Natural killer cell (primary cell): ENCODE measurements at regions of chr19 and their contacts with region 1.

Region 1: GRCh38 chr19:10797541-10798256 is 38.3 kb downstream of the TMED1 start:
- DNase-seq: peak; percentile 94 to 96
- ATAC-seq: peak; percentile 77 to 91 (median 78)
- H3K4me3 ChIP-seq: peak overlapping the region; percentile 20
- H3K4me3 Mint-ChIP-seq: peak overlapping the region; percentile 96
- H3K27ac ChIP-seq: peak overlapping the region; percentile 98
- H3K27ac Mint-ChIP-seq: peak overlapping the region; percentile 93 to 100
- H3K4me1 ChIP-seq: peaks cover 69% of the 10 kb centered on the region
- H3K4me1 Mint-ChIP-seq: peaks cover 47 to 54% of the 10 kb centered on the region in 2 donors
- H3K27me3 ChIP-seq: no peaks in the 10 kb centered on the region
- H3K27me3 Mint-ChIP-seq: no peaks in the 10 kb centered on the region
- CTCF ChIP-seq: no peak

Region 2: DNA sequence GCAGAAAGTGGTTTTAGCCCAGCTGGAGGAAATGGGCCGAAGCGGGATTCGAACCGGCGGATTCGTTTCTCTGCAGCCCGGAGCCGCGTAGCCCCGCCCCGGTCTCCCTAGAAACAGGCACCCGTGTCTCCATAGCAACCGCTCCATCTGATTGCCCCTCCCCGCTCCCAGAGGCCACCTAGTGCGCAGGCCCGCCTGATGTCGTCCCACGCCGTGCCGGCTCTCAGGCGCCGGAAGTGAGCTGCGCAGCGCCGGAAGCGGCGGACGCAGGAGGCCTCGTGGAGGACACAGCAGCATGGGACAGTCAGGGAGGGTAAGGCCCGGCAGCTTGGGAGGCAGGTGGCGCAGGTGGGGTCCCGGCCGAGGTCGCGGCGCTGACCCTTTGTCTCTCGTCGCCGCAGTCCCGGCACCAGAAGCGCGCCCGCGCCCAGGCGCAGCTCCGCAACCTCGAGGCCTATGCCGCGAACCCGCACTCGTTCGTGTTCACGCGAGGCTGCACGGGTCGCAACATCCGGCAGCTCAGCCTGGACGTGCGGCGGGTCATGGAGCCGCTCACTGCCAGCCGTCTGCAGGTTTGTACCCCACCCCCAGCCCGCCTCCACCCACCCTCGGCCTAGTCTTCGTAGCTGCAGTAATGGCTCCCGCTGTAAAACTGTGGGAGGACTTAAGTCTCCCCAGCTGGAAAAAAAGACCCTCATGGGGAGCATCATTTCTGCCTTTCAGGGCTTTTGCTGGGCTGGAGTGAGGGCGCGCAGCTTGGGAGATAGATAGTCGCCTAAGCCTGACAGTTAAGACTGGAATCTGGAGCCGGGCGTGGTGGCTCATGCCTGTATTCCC is 691.4 kb before region 1 on chr19 and contains the start of gene PPAN:
- intact Hi-C with region 1: loop called (anchors 10 kb)
- DNase-seq: peak; percentile 94 to 100
- ATAC-seq: peak; percentile 47 to 79 (median 58)
- H3K4me3 ChIP-seq: peak within 1 kb of the TSS; percentile 37
- H3K4me3 Mint-ChIP-seq: peak within 1 kb of the TSS; percentile 88
- H3K27ac ChIP-seq: peak within 1 kb of the TSS; percentile 100
- H3K27ac Mint-ChIP-seq: peak within 1 kb of the TSS; percentile 94 to 99
- H3K4me1 ChIP-seq: peaks cover 86% of the 10 kb centered on the region
- H3K4me1 Mint-ChIP-seq: peaks cover 51 to 70% of the 10 kb centered on the region in 2 donors
- H3K27me3 ChIP-seq: no peaks in the 10 kb centered on the region
- H3K27me3 Mint-ChIP-seq: no peaks in the 10 kb centered on the region
- CTCF ChIP-seq: no peak
- total RNA-seq, gene PPAN: 60.0 to 72.2 (median 69.2) TPM

Region 3: GRCh38 chr19:10565567-10566407 is 231.9 kb before region 1 on chr19 and contains the start of gene KRI1:
- intact Hi-C with region 1: loop called (anchors 2 kb)
- DNase-seq: peak; percentile 98 to 100
- ATAC-seq: peak; percentile 38 to 71 (median 51)
- H3K4me3 ChIP-seq: peak within 1 kb of the TSS; percentile 99
- H3K4me3 Mint-ChIP-seq: peak within 1 kb of the TSS; percentile 96
- H3K27ac ChIP-seq: peak within 1 kb of the TSS; percentile 93
- H3K27ac Mint-ChIP-seq: peak within 1 kb of the TSS; percentile 93 to 100
- H3K4me1 ChIP-seq: peaks cover 40% of the 10 kb centered on the region
- H3K4me1 Mint-ChIP-seq: peaks cover 47 to 62% of the 10 kb centered on the region in 2 donors
- H3K27me3 ChIP-seq: no peaks in the 10 kb centered on the region
- H3K27me3 Mint-ChIP-seq: no peaks in the 10 kb centered on the region
- CTCF ChIP-seq: no peak
- total RNA-seq, gene KRI1: 36.6 to 53.0 (median 49.5) TPM

Region 4: DNA sequence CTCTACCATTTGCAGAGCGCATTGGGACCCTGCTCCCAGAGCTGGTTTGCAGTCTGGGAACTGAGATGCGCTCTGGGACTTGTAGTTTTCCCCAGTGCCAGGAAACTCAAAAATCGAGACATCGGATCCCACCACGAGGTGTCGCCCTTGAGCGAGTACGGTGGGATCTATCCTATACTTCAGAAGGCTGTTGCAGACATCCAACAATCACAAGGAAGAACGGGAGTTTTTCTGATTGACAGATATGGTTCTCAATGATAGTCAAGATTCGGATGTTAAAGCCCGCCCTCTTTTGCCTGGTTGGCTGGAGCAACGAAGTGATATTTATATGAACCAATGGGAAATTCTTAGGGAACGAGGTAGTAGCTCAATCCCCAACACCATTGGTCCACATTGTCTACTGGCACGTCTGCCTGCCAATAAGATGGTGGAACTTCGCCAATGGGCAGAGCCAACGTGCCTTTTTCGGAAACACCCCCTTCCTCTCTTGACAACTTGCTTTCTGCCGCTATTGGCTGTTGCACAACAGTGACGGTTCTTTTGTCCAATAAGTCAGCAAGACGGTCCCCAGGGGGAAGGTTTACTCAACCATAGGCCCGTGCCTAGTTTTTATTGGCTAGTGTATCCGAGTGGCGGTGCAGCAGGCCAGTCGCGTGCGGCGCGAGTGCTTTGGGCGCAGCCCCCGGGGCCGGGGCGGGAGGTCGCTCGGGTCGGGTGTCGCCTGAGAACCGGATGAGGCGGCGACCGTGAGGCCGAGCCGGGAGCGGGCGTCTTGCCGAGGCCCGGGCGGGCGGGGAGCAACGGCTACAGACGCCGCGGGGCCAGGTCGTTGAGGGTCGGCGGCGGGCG is 80.1 kb before region 1 on chr19 and contains the start of gene DNM2:
- intact Hi-C with region 1: loop called (anchors 1 kb)
- DNase-seq: peak; percentile 96 to 99
- ATAC-seq: peak; percentile 82 to 94 (median 84)
- H3K4me3 ChIP-seq: peak within 1 kb of the TSS; percentile 76
- H3K4me3 Mint-ChIP-seq: peak within 1 kb of the TSS; percentile 98
- H3K27ac ChIP-seq: peak within 1 kb of the TSS; percentile 68
- H3K27ac Mint-ChIP-seq: peak within 1 kb of the TSS; percentile 92 to 95
- H3K4me1 ChIP-seq: peaks cover 53% of the 10 kb centered on the region
- H3K4me1 Mint-ChIP-seq: peaks cover 24 to 42% of the 10 kb centered on the region in 2 donors
- H3K27me3 ChIP-seq: no peaks in the 10 kb centered on the region
- H3K27me3 Mint-ChIP-seq: no peaks in the 10 kb centered on the region
- CTCF ChIP-seq: peak; percentile 65
- total RNA-seq, gene DNM2: 419 to 491 (median 428) TPM

Region 5: GRCh38 chr19:10758978-10759377 is 38.7 kb before region 1 on chr19:
- intact Hi-C with region 1: loop called (anchors 1 kb)
- DNase-seq: no peak
- ATAC-seq: no peak
- H3K4me3 ChIP-seq: no peak overlapping the region
- H3K4me3 Mint-ChIP-seq: peak overlapping the region; percentile 91
- H3K27ac ChIP-seq: peak overlapping the region; percentile 75
- H3K27ac Mint-ChIP-seq: peak overlapping the region; percentile 97 to 98
- H3K4me1 ChIP-seq: peaks cover 89% of the 10 kb centered on the region
- H3K4me1 Mint-ChIP-seq: peaks cover 75 to 83% of the 10 kb centered on the region in 2 donors
- H3K27me3 ChIP-seq: no peaks in the 10 kb centered on the region
- H3K27me3 Mint-ChIP-seq: no peaks in the 10 kb centered on the region
- CTCF ChIP-seq: no peak

Region 6: DNA sequence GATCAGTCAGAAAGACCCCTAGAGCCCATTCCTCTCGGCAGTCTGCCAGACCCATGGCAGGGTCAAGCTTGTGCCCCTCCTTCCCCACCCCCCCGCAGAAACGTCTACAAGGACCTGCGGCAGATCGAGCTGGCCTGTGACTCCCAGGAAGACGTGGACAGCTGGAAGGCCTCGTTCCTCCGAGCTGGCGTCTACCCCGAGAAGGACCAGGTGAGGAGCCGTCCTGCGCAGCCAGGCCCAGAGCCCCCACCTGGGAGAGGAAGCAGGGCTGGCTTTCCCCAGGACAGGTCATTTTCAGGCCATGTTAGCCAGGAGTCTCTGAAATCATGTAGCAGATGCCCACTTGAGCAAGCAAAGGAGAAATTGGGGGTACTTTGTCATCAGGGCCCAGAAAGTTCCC is 26.0 kb after region 1 on chr19:
- intact Hi-C with region 1: no loop called
- DNase-seq: no peak
- ATAC-seq: no peak
- H3K4me3 ChIP-seq: no peak overlapping the region
- H3K4me3 Mint-ChIP-seq: no peak overlapping the region
- H3K27ac ChIP-seq: no peak overlapping the region
- H3K27ac Mint-ChIP-seq: peak overlapping the region in 1 of 2 donors; percentile 45
- H3K4me1 ChIP-seq: peaks cover 22% of the 10 kb centered on the region
- H3K4me1 Mint-ChIP-seq: peaks cover 9 to 22% of the 10 kb centered on the region in 2 donors
- H3K27me3 ChIP-seq: no peaks in the 10 kb centered on the region
- H3K27me3 Mint-ChIP-seq: no peaks in the 10 kb centered on the region
- CTCF ChIP-seq: no peak

Region 7: DNA sequence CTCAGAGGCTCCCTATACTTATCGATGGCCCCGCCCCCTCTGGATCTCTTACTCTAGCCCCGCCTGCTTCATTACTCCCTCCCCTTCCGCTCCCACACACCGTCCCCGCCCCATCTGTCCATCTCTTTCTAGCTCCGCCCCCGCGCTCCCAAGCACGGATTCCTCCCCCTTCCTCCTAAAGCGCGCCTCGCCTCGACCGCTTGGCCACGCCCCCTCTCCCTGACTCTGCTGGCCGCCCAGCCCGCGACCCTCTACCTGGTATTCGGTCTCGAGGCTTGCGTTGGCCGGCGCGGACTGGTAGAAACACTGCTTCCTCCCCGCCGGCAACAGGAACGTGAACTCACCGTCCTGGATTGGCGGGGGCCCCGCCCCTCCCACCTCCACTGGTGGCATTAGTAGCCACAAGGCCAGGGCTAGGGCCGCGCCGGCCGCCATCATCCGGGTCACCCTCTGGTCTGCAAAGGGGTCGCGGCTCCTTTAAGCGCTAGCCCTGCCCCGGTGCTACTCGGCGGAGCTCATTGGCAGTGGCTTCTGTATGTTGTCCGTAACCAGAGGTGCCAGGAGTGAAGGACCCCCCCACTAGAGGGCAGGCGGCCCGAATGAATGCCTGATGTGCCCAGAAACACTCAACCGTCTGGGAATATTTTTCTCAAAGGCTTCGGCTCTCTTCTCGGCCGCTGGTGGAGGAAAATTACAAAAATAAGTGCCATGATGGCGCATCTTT is 38.2 kb after region 1 on chr19 and contains the start of gene TMED1:
- intact Hi-C with region 1: loop called (anchors 1 kb)
- DNase-seq: peak; percentile 94 to 98
- ATAC-seq: peak; percentile 86 to 95 (median 86)
- H3K4me3 ChIP-seq: peak within 1 kb of the TSS; percentile 65
- H3K4me3 Mint-ChIP-seq: peak within 1 kb of the TSS; percentile 91
- H3K27ac ChIP-seq: peak within 1 kb of the TSS; percentile 94
- H3K27ac Mint-ChIP-seq: peak within 1 kb of the TSS; percentile 98 to 100
- H3K4me1 ChIP-seq: peaks cover 20% of the 10 kb centered on the region
- H3K4me1 Mint-ChIP-seq: peaks cover 14 to 18% of the 10 kb centered on the region in 2 donors
- H3K27me3 ChIP-seq: no peaks in the 10 kb centered on the region
- H3K27me3 Mint-ChIP-seq: no peaks in the 10 kb centered on the region
- CTCF ChIP-seq: no peak
- total RNA-seq, gene TMED1: 20.5 to 27.8 (median 27.4) TPM

Region 8: GRCh38 chr19:10979951-10980381 is 182.3 kb after region 1 on chr19:
- intact Hi-C with region 1: no loop called
- DNase-seq: peak in 1 of 2 donors; percentile 54
- ATAC-seq: peak in 2 of 3 donors; percentile 37 to 64
- H3K4me3 ChIP-seq: no peak overlapping the region
- H3K4me3 Mint-ChIP-seq: no peak overlapping the region
- H3K27ac ChIP-seq: no peak overlapping the region
- H3K27ac Mint-ChIP-seq: no peak overlapping the region
- H3K4me1 ChIP-seq: peaks cover 6% of the 10 kb centered on the region
- H3K4me1 Mint-ChIP-seq: peaks cover 18 to 23% of the 10 kb centered on the region in 2 donors
- H3K27me3 ChIP-seq: no peaks in the 10 kb centered on the region
- H3K27me3 Mint-ChIP-seq: no peaks in the 10 kb centered on the region
- CTCF ChIP-seq: no peak